Heart right ventricle (tissue), 16 donors: ENCODE measurements at regions of chr18 and their contacts with region 1.

Region 1: GRCh38 chr18:12485479-12486105 is 77.9 kb downstream of the PRELID3A start:
- DNase-seq: no peak
- ATAC-seq: no peak
- H3K4me3 ChIP-seq: no peak overlapping the region
- H3K27ac ChIP-seq: no peak overlapping the region
- H3K4me1 ChIP-seq: peaks cover 0 to 9% (median 0%) of the 10 kb centered on the region in 9 donors
- H3K27me3 ChIP-seq: no peaks in the 10 kb centered on the region
- CTCF ChIP-seq: no peak

Region 2: DNA sequence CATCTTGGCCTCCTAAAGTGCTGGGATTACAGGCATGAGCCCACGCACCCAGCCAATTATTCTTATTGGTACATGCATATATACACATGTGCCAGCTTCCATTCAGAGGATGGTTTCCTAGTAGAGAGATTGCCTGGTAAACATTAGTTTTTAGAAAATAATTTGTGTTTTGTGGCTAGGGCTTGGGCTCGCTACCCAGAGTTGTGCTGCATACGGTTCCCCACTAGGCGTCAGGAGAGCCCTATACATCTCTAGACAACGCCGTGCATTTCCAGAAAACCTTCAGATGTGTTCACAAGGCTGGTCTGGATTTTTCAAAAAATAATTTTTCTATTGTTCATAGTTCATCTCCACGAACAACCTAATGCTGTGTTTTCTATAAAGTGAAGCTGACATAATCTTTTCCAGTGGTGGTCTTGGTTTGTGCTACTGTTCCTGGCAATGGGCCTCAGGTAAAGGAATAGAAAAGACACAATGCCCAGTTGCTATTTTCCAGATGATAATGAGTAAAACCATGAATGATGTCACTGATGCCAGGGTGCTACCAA is 93.9 kb before region 1 on chr18:
- intact Hi-C with region 1: loop called in 1 of 10 experiments (anchors 10 kb)
- DNase-seq: peak; percentile 29 to 58
- ATAC-seq: peak; percentile 77 to 95 (median 93)
- H3K4me3 ChIP-seq: no peak overlapping the region
- H3K27ac ChIP-seq: no peak overlapping the region
- H3K4me1 ChIP-seq: peaks cover 0 to 3% (median 0%) of the 10 kb centered on the region in 9 donors
- H3K27me3 ChIP-seq: no peaks in the 10 kb centered on the region
- CTCF ChIP-seq: peak; percentile 78 to 95 (median 91)